ENCODE measurements at regions of chr18 and their contacts with region 1.

Region 1: GRCh38 chr18:11995445-11996189 is 14.3 kb downstream of the IMPA2 start:
- DNase-seq: peak; percentile 81 to 85 (median 82)
- H3K4me3 ChIP-seq: peak overlapping the region in 4 of 7 experiments; percentile 4 to 52 (median 30)
- H3K27ac ChIP-seq: no peak overlapping the region
- H3K4me1 ChIP-seq: peaks cover 4 to 28% (median 23%) of the 10 kb centered on the region in 4 experiments
- H3K27me3 ChIP-seq: no peaks in the 10 kb centered on the region

Region 2: GRCh38 chr18:11925800-11926481 is 69.7 kb before region 1 on chr18:
- CTCF ChIA-PET with region 1: interaction called, 667 read pairs
- POLR2A ChIA-PET with region 1: no interaction called
- DNase-seq: no peak
- H3K4me3 ChIP-seq: no peak overlapping the region
- H3K27ac ChIP-seq: no peak overlapping the region
- H3K4me1 ChIP-seq: peaks cover 0 to 2% (median 0%) of the 10 kb centered on the region in 4 experiments
- H3K27me3 ChIP-seq: no peaks in the 10 kb centered on the region

Region 3: GRCh38 chr18:11955239-11956029 is 40.2 kb before region 1 on chr18:
- CTCF ChIA-PET with region 1: interaction called, 667 read pairs
- POLR2A ChIA-PET with region 1: no interaction called
- DNase-seq: peak; percentile 39 to 78 (median 74)
- H3K4me3 ChIP-seq: no peak overlapping the region
- H3K27ac ChIP-seq: no peak overlapping the region
- H3K4me1 ChIP-seq: peaks cover 3 to 7% (median 5%) of the 10 kb centered on the region in 4 experiments
- H3K27me3 ChIP-seq: no peaks in the 10 kb centered on the region

Region 4: DNA sequence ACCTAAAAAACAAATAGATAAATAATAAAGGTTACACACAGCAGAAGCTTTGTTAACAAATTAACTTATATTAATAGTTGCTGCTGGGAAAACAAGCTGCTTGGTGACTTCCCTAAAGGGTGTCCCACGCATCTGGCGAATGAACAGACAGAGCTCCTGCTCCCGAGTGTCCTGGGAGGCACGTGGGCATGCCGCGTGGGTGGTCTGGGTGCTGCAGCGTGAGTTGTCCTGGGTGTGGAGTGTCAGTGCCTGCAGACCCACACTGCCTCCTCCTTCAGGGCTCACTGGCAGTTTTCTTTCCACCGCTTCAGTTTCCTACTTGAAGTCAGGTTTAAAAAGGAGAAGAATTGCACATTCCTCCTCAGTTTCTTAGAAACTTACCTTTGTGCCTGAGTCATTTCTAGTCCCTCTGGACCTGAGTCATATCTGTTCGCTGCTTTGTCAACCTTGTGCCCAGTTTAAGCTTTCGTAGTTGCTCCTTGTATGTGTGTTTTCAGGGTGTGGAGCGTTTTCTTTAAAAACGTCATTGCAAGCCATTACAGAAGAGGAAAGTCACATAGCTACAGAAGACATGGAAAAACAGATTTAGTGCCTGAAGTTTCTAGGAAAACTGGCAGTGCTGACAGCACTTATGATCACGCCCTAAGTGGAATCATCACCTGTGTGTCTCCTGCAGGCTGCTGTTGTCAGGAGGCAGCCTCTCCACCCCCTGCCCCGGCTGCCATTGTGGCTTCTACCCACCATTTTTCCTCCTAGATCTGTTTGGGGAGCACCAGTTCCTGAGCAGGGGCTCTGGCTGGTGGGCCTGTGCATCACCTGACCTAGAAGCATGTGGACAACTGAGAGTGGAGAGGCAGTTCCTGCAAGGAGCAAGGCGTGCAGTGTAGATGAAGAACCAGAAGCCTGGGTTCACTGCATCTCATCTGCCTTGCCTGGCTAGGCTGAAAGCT is 10.2 kb after region 1 on chr18:
- CTCF ChIA-PET with region 1: interaction called, 14 read pairs
- POLR2A ChIA-PET with region 1: no interaction called
- DNase-seq: no peak
- H3K4me3 ChIP-seq: no peak overlapping the region
- H3K27ac ChIP-seq: no peak overlapping the region
- H3K4me1 ChIP-seq: no peaks in the 10 kb centered on the region
- H3K27me3 ChIP-seq: no peaks in the 10 kb centered on the region

Region 5: GRCh38 chr18:12038639-12039417 is 43.2 kb after region 1 on chr18:
- CTCF ChIA-PET with region 1: interaction called, 11 read pairs
- POLR2A ChIA-PET with region 1: no interaction called
- DNase-seq: peak; percentile 70 to 76 (median 72)
- H3K4me3 ChIP-seq: peak overlapping the region; percentile 30 to 73 (median 67)
- H3K27ac ChIP-seq: no peak overlapping the region
- H3K4me1 ChIP-seq: peaks cover 0 to 21% (median 17%) of the 10 kb centered on the region in 4 experiments
- H3K27me3 ChIP-seq: peaks cover 0 to 7% (median 4%) of the 10 kb centered on the region in 5 experiments

Region 6: DNA sequence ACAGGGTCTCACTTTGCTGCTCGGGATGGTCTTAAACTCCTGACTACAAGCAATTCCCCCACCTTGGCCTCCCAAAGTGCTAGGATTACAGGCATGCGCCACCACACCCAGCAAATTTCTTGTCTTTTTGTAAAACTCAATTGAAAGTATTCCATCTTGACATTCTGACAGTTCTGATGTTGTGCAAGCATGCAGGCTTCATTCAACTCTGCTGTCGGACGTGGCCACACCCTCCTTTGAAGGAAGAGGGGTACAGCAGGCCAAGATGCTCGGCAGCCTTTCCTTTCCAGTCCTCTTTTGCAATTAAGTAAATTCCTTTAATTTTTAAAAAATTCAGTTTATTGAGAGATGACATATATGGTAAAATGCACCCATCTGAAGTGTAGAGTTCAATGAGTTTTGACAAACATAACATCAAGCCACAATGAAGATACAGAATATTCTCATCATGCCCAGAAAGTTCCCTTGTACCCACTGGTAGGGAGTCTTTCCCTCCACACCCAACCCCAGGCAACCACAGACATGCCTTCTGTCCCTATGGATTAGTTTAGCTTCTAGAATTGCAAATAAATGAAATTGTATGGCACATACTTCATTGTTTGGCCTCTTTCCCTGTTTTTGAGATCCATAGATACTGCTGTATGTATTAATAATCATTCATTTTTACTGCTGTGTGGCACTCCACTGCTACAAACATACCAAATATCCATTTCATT is 345.5 kb after region 1 on chr18:
- CTCF ChIA-PET with region 1: no interaction called
- POLR2A ChIA-PET with region 1: no interaction called
- DNase-seq: no peak
- H3K4me3 ChIP-seq: no peak overlapping the region
- H3K27ac ChIP-seq: no peak overlapping the region
- H3K4me1 ChIP-seq: no peaks in the 10 kb centered on the region
- H3K27me3 ChIP-seq: no peaks in the 10 kb centered on the region